Motor neuron (in vitro differentiated cells): ENCODE measurements at regions of chr12 and their contacts with region 1.

Region 1: GRCh38 chr12:17866802-17867201 is 223.2 kb downstream of the RERGL start:
- ATAC-seq: no peak
- H3K4me3 ChIP-seq: no peak overlapping the region
- H3K27ac ChIP-seq: no peak overlapping the region
- H3K4me1 ChIP-seq: no peaks in the 10 kb centered on the region

Region 2: GRCh38 chr12:17778242-17778641 is 88.6 kb before region 1 on chr12:
- in situ Hi-C with region 1: loop called in 2 of 9 experiments (anchors 10 kb)
- ATAC-seq: no peak
- H3K4me3 ChIP-seq: no peak overlapping the region
- H3K27ac ChIP-seq: no peak overlapping the region
- H3K4me1 ChIP-seq: no peaks in the 10 kb centered on the region

Region 3: GRCh38 chr12:17793854-17794253 is 72.9 kb before region 1 on chr12:
- in situ Hi-C with region 1: loop called in 1 of 9 experiments (anchors 10 kb)
- ATAC-seq: peak in 1 of 8 experiments; percentile 32
- H3K4me3 ChIP-seq: no peak overlapping the region
- H3K27ac ChIP-seq: no peak overlapping the region
- H3K4me1 ChIP-seq: no peaks in the 10 kb centered on the region

Region 4: GRCh38 chr12:19058235-19059021 is 1191.6 kb after region 1 on chr12:
- in situ Hi-C with region 1: no loop called
- ATAC-seq: peak in 1 of 8 experiments; percentile 17
- H3K4me3 ChIP-seq: no peak overlapping the region
- H3K27ac ChIP-seq: no peak overlapping the region
- H3K4me1 ChIP-seq: peaks cover 0 to 7% of the 10 kb centered on the region in 2 donors